Activated naive CD4-positive, alpha-beta T cell treated with anti-CD3 and anti-CD28 coated beads for 36 hours (primary cell): ENCODE measurements at regions of chr18 and their contacts with region 1.

Region 1: GRCh38 chr18:49486953-49487710 is at the start of gene C18orf32:
- DNase-seq: peak; percentile 94
- H3K4me3 Mint-ChIP-seq: peak within 1 kb of the TSS; percentile 94
- H3K27ac Mint-ChIP-seq: peak within 1 kb of the TSS; percentile 94
- H3K4me1 Mint-ChIP-seq: peaks cover 63% of the 10 kb centered on the region
- H3K27me3 Mint-ChIP-seq: no peaks in the 10 kb centered on the region
- total RNA-seq, gene C18orf32: 24.1 to 26.6 TPM

Region 2: GRCh38 chr18:48538531-48539405 is 948.4 kb before region 1 on chr18 and contains the start of gene CTIF:
- CTCF ChIA-PET with region 1: no interaction called
- intact Hi-C with region 1: loop called (anchors 1 kb)
- DNase-seq: peak; percentile 86
- H3K4me3 Mint-ChIP-seq: peak within 1 kb of the TSS; percentile 87
- H3K27ac Mint-ChIP-seq: no peak within 1 kb of the TSS
- H3K4me1 Mint-ChIP-seq: peaks cover 7% of the 10 kb centered on the region
- H3K27me3 Mint-ChIP-seq: peaks cover 11% of the 10 kb centered on the region
- total RNA-seq, gene CTIF: 3.6 to 4.1 TPM

Region 3: GRCh38 chr18:49459404-49460171 is 27.5 kb before region 1 on chr18:
- CTCF ChIA-PET with region 1: interaction called, 5 read pairs
- intact Hi-C with region 1: loop called (anchors 1 kb)
- DNase-seq: peak; percentile 46
- H3K4me3 Mint-ChIP-seq: peak overlapping the region; percentile 89
- H3K27ac Mint-ChIP-seq: no peak overlapping the region
- H3K4me1 Mint-ChIP-seq: peaks cover 45% of the 10 kb centered on the region
- H3K27me3 Mint-ChIP-seq: no peaks in the 10 kb centered on the region

Region 4: DNA sequence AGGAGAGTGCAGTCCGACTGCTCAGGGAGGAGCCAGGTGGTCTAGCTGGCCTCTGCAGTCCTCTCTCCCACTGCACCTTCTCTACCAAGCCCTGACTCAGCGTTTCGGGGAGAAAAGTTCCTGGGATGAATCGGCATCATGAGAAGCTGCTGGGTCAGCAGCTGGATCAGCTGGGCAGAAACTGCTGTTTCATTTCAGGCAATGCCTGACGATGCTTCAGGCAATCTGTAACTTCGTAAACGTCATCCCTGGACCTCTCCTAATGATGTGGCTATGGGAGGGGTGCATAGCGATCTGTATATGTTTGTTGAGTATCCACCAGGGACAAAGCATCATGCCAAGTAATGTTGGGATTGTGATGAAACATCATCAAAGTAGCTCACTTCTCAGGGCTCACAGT is 95.4 kb after region 1 on chr18:
- CTCF ChIA-PET with region 1: no interaction called
- intact Hi-C with region 1: no loop called
- DNase-seq: no peak
- H3K4me3 Mint-ChIP-seq: no peak overlapping the region
- H3K27ac Mint-ChIP-seq: no peak overlapping the region
- H3K4me1 Mint-ChIP-seq: no peaks in the 10 kb centered on the region
- H3K27me3 Mint-ChIP-seq: peaks cover 10% of the 10 kb centered on the region

Region 5: GRCh38 chr18:49813319-49814146 is 326.4 kb after region 1 on chr18 and contains the start of gene ACAA2:
- CTCF ChIA-PET with region 1: no interaction called
- intact Hi-C with region 1: loop called (anchors 1 kb)
- DNase-seq: peak; percentile 80
- H3K4me3 Mint-ChIP-seq: peak within 1 kb of the TSS; percentile 90
- H3K27ac Mint-ChIP-seq: peak within 1 kb of the TSS; percentile 96
- H3K4me1 Mint-ChIP-seq: peaks cover 36% of the 10 kb centered on the region
- H3K27me3 Mint-ChIP-seq: no peaks in the 10 kb centered on the region
- total RNA-seq, gene ACAA2: 67.9 to 69.8 TPM